ENCODE measurements at regions of chr13 and their contacts with region 1.

Region 1: GRCh38 chr13:46341112-46341711 is 45.8 kb downstream of the RUBCNL start:
- DNase-seq: peak; percentile 94 to 99 (median 96)
- H3K4me3 ChIP-seq: peak overlapping the region in 1 of 3 experiments; percentile 12
- H3K4me3 Mint-ChIP-seq: peak overlapping the region in 1 of 2 donors; percentile 62
- H3K27ac ChIP-seq: peak overlapping the region; percentile 91 to 98
- H3K27ac Mint-ChIP-seq: peak overlapping the region; percentile 97 to 100 (median 99)
- H3K4me1 ChIP-seq: peaks cover 49 to 54% of the 10 kb centered on the region in 2 donors
- H3K4me1 Mint-ChIP-seq: peaks cover 56% of the 10 kb centered on the region
- H3K27me3 ChIP-seq: no peaks in the 10 kb centered on the region
- H3K27me3 Mint-ChIP-seq: peaks cover 0 to 5% (median 0%) of the 10 kb centered on the region in 3 donors
- CTCF ChIP-seq: no peak

Region 2: DNA sequence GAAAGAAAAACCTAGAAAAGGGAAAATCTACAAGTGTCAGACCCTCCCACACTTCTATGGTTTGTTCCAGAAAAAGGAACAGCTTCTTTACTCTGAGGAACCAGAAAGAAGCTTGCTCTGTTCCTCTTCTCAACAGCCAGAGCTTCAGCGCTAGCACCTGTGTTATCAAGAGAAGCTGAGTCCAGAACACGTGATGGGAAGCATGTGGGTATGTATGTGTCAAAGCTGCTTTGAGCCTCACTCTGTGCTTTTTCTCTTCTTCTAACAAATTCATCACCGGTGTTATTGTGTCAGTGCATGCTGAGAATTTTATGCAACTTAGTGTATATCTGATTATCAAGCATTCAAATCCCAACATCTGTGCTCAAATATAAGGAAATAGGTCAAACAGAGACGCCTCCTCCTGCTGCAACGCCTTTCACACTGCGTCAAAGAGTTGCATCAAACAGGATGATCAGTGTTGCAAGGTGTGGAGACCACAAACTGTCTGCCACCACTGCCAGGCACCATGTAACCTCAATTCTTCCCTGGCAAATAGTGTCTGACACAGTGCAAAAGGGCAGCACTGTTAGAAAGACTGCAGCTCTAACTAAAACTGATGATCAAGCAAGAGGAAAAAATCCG is 45.6 kb before region 1 on chr13:
- intact Hi-C with region 1: no loop called
- DNase-seq: peak; percentile 81 to 88 (median 84)
- H3K4me3 ChIP-seq: peak overlapping the region in 1 of 3 experiments; percentile 42
- H3K4me3 Mint-ChIP-seq: peak overlapping the region in 1 of 2 donors; percentile 73
- H3K27ac ChIP-seq: peak overlapping the region; percentile 58 to 85
- H3K27ac Mint-ChIP-seq: peak overlapping the region; percentile 91 to 96 (median 95)
- H3K4me1 ChIP-seq: peaks cover 42% of the 10 kb centered on the region in 2 donors
- H3K4me1 Mint-ChIP-seq: peaks cover 54% of the 10 kb centered on the region
- H3K27me3 ChIP-seq: no peaks in the 10 kb centered on the region
- H3K27me3 Mint-ChIP-seq: no peaks in the 10 kb centered on the region
- CTCF ChIP-seq: no peak

Region 3: GRCh38 chr13:46354156-46355091 is 13.2 kb after region 1 on chr13:
- intact Hi-C with region 1: loop called (anchors 2 kb)
- DNase-seq: peak; percentile 89 to 96 (median 96)
- H3K4me3 ChIP-seq: no peak overlapping the region
- H3K4me3 Mint-ChIP-seq: peak overlapping the region; percentile 13 to 80
- H3K27ac ChIP-seq: peak overlapping the region; percentile 78 to 97
- H3K27ac Mint-ChIP-seq: peak overlapping the region; percentile 98 to 100 (median 99)
- H3K4me1 ChIP-seq: peaks cover 44 to 47% of the 10 kb centered on the region in 2 donors
- H3K4me1 Mint-ChIP-seq: peaks cover 43% of the 10 kb centered on the region
- H3K27me3 ChIP-seq: no peaks in the 10 kb centered on the region
- H3K27me3 Mint-ChIP-seq: no peaks in the 10 kb centered on the region
- CTCF ChIP-seq: no peak

Region 4: GRCh38 chr13:46961719-46962118 is 620.5 kb after region 1 on chr13:
- intact Hi-C with region 1: loop called in 1 of 2 experiments (anchors 5 kb)
- DNase-seq: peak; percentile 79 to 90 (median 83)
- H3K4me3 ChIP-seq: no peak overlapping the region
- H3K4me3 Mint-ChIP-seq: no peak overlapping the region
- H3K27ac ChIP-seq: peak overlapping the region in 1 of 2 donors; percentile 32
- H3K27ac Mint-ChIP-seq: peak overlapping the region in 5 of 7 donors; percentile 6 to 91 (median 72)
- H3K4me1 ChIP-seq: peaks cover 10 to 16% of the 10 kb centered on the region in 2 donors
- H3K4me1 Mint-ChIP-seq: peaks cover 15% of the 10 kb centered on the region
- H3K27me3 ChIP-seq: no peaks in the 10 kb centered on the region
- H3K27me3 Mint-ChIP-seq: no peaks in the 10 kb centered on the region
- CTCF ChIP-seq: no peak